Right cardiac atrium (tissue), 5 donors: ENCODE measurements at regions of chr3 and their contacts with region 1.

Region 1: GRCh38 chr3:149657926-149658733 is at the start of gene WWTR1:
- DNase-seq: peak; percentile 95 to 97 (median 95)
- ATAC-seq: peak; percentile 93 to 95
- H3K4me3 ChIP-seq: peak within 1 kb of the TSS; percentile 48
- H3K27ac ChIP-seq: peak within 1 kb of the TSS; percentile 84
- H3K4me1 ChIP-seq: no peaks in the 10 kb centered on the region
- H3K27me3 ChIP-seq: no peaks in the 10 kb centered on the region
- total RNA-seq, gene WWTR1: 48.2 to 99.2 (median 56.9) TPM

Region 2: DNA sequence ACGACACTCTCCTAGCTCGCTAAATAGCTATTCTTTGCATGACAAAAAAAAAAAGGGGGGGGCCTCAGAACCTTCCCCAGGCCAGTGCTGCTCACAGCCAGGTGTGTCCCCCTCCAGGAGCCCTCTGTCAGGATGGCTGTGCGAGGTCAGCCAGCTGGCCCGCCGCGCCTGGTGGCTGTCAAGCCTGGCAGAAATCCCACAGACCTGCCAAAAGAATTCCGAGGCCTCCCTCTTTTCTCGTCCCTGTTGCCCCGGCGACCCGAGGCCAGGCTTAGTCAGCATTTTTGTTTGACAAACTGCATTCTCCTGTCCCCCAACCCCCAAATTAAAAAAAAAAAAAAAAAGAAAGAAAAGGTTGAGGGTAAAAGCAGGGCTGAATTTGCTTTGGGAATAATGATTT is 121.7 kb before region 1 on chr3:
- intact Hi-C with region 1: loop called in 2 of 4 experiments (anchors 5 kb)
- DNase-seq: peak; percentile 66 to 88 (median 87)
- ATAC-seq: peak; percentile 78 to 82
- H3K4me3 ChIP-seq: no peak overlapping the region
- H3K27ac ChIP-seq: no peak overlapping the region
- H3K4me1 ChIP-seq: peaks cover 17% of the 10 kb centered on the region
- H3K27me3 ChIP-seq: no peaks in the 10 kb centered on the region

Region 3: DNA sequence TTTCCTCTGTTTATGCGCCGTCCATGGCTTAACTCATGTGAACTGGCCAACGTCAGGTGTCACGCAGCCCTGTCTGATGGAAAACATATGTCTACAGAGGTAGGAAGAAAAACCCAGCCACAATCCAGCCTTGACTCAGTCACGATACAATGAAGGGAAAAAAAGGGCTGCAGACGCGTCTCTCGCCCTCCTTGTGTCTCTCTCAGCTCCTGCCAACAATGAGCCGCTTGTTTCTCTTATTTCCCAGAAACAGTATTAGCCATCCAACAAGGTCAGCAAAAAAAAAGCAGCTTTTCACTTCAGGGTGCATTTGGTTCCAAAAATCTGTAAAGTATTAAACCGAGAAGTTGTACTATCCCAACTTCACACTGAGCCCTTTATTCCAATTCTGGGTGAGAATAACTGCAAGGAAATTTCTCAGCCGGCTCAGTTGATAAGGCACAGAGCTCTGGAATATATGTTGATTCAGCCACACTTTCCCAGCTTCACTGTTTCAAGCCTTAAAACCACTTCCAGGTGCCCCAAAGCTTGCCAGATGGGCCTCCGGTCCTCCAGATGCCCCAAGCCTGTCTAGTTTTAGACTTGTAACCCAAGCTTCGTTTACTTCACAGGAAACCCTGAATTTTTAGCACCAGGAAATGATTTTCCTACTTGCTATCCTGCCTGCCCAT is 104.2 kb before region 1 on chr3:
- intact Hi-C with region 1: loop called in 1 of 4 experiments (anchors 10 kb)
- DNase-seq: peak; percentile 63 to 75 (median 67)
- ATAC-seq: peak; percentile 74 to 90
- H3K4me3 ChIP-seq: no peak overlapping the region
- H3K27ac ChIP-seq: peak overlapping the region; percentile 86
- H3K4me1 ChIP-seq: peaks cover 14% of the 10 kb centered on the region
- H3K27me3 ChIP-seq: no peaks in the 10 kb centered on the region

Region 4: DNA sequence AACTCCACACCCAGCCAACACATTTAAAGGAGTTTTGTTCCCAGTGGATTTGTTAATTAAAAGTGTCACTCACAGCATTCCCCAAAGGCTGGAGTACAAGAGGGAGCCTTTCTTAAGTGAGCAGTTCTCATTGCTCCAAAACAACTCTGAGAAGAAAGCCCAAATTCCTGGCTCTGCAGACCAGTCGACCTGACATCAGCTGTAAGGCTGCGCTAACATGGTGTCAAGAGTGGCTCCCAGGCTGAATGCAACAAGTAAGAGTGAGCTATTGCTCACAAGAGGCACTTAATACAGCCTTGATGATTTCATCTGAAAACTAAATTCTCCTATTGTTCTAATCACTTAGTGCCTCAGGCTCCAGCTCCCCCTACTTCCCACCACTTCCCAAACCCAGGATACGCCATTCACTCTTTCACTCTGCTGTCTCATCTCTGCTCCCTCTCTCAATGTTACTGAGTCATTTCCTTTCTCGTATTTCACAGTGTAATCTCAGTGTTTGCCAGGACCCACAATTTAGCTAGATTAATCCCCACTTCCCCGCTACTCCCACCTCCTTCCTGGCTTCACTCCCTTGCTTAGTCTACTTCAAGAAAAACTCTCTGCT is 82.1 kb before region 1 on chr3:
- intact Hi-C with region 1: loop called in 2 of 4 experiments (anchors 10 kb)
- DNase-seq: peak in 2 of 3 donors; percentile 24 to 37
- ATAC-seq: peak; percentile 84 to 91
- H3K4me3 ChIP-seq: no peak overlapping the region
- H3K27ac ChIP-seq: peak overlapping the region; percentile 87
- H3K4me1 ChIP-seq: peaks cover 33% of the 10 kb centered on the region
- H3K27me3 ChIP-seq: no peaks in the 10 kb centered on the region